Activated CD4-positive, alpha-beta T cell treated with anti-CD3 and anti-CD28 coated beads for 36 hours (primary cell): ENCODE measurements at regions of chr12 and their contacts with region 1.

Region 1: DNA sequence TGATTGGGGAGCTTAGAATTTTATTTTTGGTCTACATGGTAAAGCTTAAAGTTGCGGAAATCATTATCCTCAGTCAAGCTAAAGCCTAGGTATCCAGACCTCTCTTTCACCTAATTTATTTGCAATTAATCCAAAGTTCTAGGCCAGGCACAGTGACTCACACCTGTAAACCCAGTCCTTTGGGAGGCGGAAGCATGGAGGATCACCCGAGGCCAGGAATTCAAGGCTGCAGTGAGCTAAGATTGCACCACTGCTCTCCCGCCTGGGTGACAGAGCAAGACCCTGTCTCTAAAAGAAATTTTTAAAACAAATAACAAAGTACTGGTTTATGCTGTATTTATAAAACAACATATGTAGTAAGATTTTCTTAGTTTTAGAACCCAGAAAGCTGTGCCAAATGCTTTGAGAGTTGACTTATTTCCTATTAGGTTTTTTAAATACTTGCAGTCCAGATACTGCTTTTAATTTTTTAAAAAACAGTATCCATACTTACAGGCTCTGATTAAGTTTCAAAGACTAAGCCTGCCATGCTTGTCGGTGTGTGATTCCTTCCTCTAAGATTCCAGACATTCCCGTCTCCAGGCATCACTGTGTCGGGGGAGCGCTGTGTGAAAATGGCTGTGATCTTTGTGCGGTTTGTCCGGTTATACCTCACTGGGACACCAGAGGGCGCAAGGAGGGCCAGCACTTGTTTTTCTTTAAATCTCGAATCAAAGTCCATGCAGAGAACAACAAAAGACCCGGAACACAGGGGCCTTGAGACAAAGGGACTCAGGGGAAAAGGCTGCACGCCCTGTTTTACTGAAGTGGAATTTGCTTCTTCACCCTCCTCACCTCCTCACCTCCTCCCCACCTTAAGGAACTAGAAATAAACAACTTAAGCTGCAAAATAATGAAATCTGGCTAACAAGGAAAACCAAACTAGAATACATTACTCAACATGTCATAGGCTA is 24.6 kb upstream of the TMPO start:
- DNase-seq: peak; percentile 88
- ATAC-seq: peak; percentile 85
- H3K4me3 Mint-ChIP-seq: peak overlapping the region; percentile 22
- H3K27ac Mint-ChIP-seq: peak overlapping the region; percentile 81
- H3K4me1 Mint-ChIP-seq: peaks cover 5% of the 10 kb centered on the region
- H3K27me3 Mint-ChIP-seq: no peaks in the 10 kb centered on the region

Region 2: DNA sequence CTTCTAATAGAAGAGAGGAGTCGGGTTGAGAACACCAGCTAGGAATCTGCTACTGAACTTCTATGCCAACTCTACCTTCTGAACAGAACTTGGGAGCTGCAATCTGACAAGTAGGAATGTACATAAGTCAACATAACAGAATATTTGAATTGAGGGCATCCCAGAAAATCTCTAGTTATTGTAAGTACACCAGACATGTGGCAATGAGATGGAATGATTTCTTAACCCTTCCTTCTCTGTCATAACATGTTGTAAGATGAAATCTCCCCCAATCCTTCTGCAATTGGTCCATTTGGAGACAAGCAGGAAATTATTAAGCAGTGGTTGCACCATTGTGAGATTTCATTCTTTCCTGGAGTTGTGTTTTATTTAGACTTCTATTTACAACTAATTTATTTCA is 44.1 kb before region 1 on chr12:
- CTCF ChIA-PET with region 1: no interaction called
- POLR2A ChIA-PET with region 1: no interaction called
- intact Hi-C with region 1: no loop called
- DNase-seq: no peak
- ATAC-seq: no peak
- H3K4me3 Mint-ChIP-seq: no peak overlapping the region
- H3K27ac Mint-ChIP-seq: no peak overlapping the region
- H3K4me1 Mint-ChIP-seq: no peaks in the 10 kb centered on the region
- H3K27me3 Mint-ChIP-seq: peaks cover 18% of the 10 kb centered on the region

Region 3: DNA sequence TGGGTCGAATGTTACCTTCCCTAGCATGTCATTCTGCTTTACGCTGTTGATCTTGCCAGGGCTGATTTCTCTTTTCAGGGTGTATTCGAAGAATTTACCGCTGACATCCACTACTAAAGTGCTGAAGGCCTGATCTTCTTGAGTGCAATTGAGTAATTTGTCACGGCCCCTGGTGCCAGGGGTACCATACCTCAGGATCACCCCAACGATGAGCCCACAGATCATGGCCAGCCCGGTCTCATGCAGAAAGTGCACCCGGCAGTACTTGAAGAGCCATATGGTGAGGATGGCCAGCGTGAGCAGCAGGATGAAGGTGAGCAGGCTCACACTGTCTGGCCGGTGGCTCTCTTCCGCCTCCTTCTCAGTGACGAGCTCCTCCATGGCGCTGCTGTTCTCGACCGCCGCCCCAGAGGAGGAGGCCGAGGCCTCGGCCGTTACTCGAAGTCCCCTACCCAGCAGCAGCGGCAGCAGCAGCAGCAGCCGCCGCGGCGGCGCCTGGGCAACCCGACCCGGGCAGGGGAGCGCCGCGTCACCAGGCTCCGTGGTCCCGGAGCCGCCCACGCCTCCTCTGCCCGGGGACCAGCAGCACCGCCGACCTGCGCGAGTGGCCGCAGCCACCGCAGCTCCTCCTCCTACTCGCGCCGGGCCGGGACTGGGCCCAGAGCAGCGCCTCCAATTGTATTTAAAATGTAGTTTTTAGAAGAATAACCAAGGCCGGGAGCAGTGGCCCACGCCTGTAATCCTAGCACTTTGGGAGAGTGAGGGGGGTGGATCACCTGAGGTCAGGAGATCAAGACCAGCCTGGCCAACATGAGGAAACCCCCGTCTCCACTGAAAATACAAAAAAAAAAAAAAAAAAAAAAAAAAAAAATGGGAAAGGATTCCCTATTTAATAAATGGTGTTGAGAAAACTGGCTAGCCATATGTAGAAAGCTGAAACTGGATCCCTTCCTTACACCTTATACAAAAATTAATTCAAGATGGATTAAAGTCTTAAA is 33.9 kb before region 1 on chr12:
- CTCF ChIA-PET with region 1: interaction called, 12 read pairs
- POLR2A ChIA-PET with region 1: no interaction called
- intact Hi-C with region 1: no loop called
- DNase-seq: peak; percentile 43
- ATAC-seq: peak; percentile 51
- H3K4me3 Mint-ChIP-seq: peak overlapping the region; percentile 28
- H3K27ac Mint-ChIP-seq: no peak overlapping the region
- H3K4me1 Mint-ChIP-seq: peaks cover 14% of the 10 kb centered on the region
- H3K27me3 Mint-ChIP-seq: peaks cover 27% of the 10 kb centered on the region

Region 4: DNA sequence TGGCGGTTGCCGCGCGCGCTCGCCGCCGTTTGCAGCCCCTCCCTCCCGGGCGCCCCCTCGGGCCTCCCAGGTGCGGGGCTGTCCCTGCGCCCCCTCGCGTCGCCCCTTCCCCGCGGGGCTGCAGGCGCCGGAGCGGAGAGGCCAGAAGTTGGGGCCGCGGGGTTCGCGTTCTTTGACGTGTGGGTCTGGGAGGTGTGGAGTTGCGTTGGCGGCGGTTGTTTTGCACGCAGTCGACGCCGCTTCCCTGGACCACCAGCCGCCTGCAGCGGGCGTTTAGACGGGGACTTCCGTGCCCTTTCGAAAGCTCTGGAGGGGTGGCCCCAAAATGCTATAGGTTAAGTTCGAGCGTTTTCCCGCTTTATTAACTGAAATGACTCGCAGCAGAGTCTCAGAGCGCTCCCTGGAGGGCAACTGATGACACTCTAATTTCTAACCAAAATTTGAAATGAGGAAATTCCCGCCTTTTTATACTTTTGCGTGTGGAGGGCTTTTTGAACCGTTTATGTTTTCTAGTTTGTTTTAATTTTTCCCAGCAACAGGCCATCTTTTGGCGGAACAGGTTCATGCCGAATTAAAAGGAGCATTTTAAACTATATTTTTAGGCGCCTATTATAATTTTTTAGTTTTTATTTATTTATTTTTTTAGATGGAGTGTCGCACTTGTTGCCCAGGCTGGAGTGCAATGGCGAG is 25.6 kb after region 1 on chr12:
- CTCF ChIA-PET with region 1: interaction called, 25 read pairs
- POLR2A ChIA-PET with region 1: interaction called, 4 read pairs
- intact Hi-C with region 1: loop called (anchors 1 kb)
- DNase-seq: peak; percentile 94
- ATAC-seq: peak; percentile 76
- H3K4me3 Mint-ChIP-seq: peak overlapping the region; percentile 87
- H3K27ac Mint-ChIP-seq: peak overlapping the region; percentile 96
- H3K4me1 Mint-ChIP-seq: peaks cover 34% of the 10 kb centered on the region
- H3K27me3 Mint-ChIP-seq: no peaks in the 10 kb centered on the region

Region 5: GRCh38 chr12:98644711-98645402 is 154.1 kb after region 1 on chr12 and contains the starts of genes APAF1 and IKBIP:
- CTCF ChIA-PET with region 1: interaction called, 3 read pairs
- POLR2A ChIA-PET with region 1: no interaction called
- intact Hi-C with region 1: loop called in 1 of 2 experiments (anchors 1 kb)
- DNase-seq: peak; percentile 98
- ATAC-seq: peak; percentile 92
- H3K4me3 Mint-ChIP-seq: peak within 1 kb of the TSS; percentile 91
- H3K27ac Mint-ChIP-seq: peak within 1 kb of the TSS; percentile 94
- H3K4me1 Mint-ChIP-seq: peaks cover 16% of the 10 kb centered on the region
- H3K27me3 Mint-ChIP-seq: no peaks in the 10 kb centered on the region
- total RNA-seq, gene APAF1: 16.5 to 17.4 TPM
- total RNA-seq, gene IKBIP: 20.1 to 27.0 TPM